ENCODE measurements at regions of chr20 and their contacts with region 1.

Region 1: GRCh38 chr20:50153485-50154377 is at the start of gene PEDS1:
- DNase-seq: peak; percentile 84 to 90
- ATAC-seq: peak; percentile 76 to 80
- H3K4me3 ChIP-seq: peak within 1 kb of the TSS; percentile 82 to 90 (median 82)
- H3K27ac ChIP-seq: peak within 1 kb of the TSS; percentile 91 to 98 (median 96)
- H3K4me1 ChIP-seq: peaks cover 41 to 43% of the 10 kb centered on the region in 2 donors
- H3K27me3 ChIP-seq: no peaks in the 10 kb centered on the region
- CTCF ChIP-seq: peak in 3 of 5 experiments; percentile 16 to 36 (median 17)
- POLR2A ChIP-seq: peak; percentile 96 to 98
- total RNA-seq, gene PEDS1: 33.2 to 77.9 (median 38.2) TPM

Region 2: DNA sequence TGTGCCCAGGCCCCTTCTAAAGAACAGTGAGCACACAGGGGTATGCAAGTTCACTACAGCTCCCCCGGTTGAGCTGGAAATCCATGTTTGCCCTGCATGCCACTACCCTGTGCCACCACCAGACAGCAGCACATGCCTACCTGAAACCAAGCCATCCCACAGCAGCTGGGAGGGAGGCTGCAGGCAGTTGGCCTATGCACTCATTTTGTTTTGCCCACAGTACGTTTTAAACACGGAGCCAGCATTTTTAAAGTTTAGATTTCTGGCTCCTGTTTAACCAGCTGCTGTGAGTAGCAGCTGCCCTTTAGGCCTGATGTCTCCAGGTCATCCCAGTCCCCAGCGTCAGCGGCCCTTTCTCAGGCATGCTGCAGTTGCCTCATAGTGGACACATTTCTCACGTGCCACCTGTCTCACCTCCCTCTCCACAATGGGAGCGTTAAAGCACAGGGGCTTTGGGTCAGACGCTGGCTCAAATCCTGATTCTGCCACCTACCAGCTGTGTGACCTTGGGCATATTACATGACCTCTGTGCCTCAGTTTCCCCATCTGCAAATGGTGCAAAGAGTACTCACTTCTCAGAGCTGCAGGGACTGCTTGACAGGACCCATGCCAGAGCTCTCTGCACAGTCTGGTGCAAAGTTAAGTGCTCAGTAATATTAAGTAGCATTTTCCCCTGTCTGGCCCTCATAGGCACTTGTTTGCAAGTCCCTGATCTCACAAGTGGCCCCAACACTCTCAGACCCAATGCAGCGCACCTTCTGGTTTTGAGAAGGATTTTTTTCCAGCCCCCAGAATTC is 32.6 kb before region 1 on chr20:
- in situ Hi-C with region 1: no loop called
- intact Hi-C with region 1: loop called (anchors 2 kb)
- DNase-seq: peak; percentile 61 to 83
- ATAC-seq: peak; percentile 80 to 89
- H3K4me3 ChIP-seq: no peak overlapping the region
- H3K27ac ChIP-seq: peak overlapping the region; percentile 43 to 81 (median 68)
- H3K4me1 ChIP-seq: peaks cover 10 to 14% of the 10 kb centered on the region in 2 donors
- H3K27me3 ChIP-seq: no peaks in the 10 kb centered on the region
- CTCF ChIP-seq: peak; percentile 92 to 96 (median 96)
- POLR2A ChIP-seq: no peak

Region 3: GRCh38 chr20:50528804-50529351 is 375.1 kb after region 1 on chr20:
- in situ Hi-C with region 1: no loop called
- intact Hi-C with region 1: no loop called
- DNase-seq: no peak
- ATAC-seq: no peak
- H3K4me3 ChIP-seq: no peak overlapping the region
- H3K27ac ChIP-seq: no peak overlapping the region
- H3K4me1 ChIP-seq: peaks cover 63% of the 10 kb centered on the region in 2 donors
- H3K27me3 ChIP-seq: no peaks in the 10 kb centered on the region
- CTCF ChIP-seq: no peak
- POLR2A ChIP-seq: no peak

Measured in gastrocnemius medialis (tissue), 4 donors.